ENCODE measurements at regions of chr16 and their contacts with region 1.

Region 1: GRCh38 chr16:22677024-22677830 is 136.7 kb upstream of the HS3ST2 start:
- DNase-seq: no peak
- ATAC-seq: peak in 2 of 4 donors; percentile 29 to 76
- H3K4me3 ChIP-seq: no peak overlapping the region
- H3K27ac ChIP-seq: no peak overlapping the region
- H3K4me1 ChIP-seq: no peaks in the 10 kb centered on the region
- H3K27me3 ChIP-seq: peaks cover 0 to 4% (median 0%) of the 10 kb centered on the region in 3 donors
- CTCF ChIP-seq: no peak

Region 2: DNA sequence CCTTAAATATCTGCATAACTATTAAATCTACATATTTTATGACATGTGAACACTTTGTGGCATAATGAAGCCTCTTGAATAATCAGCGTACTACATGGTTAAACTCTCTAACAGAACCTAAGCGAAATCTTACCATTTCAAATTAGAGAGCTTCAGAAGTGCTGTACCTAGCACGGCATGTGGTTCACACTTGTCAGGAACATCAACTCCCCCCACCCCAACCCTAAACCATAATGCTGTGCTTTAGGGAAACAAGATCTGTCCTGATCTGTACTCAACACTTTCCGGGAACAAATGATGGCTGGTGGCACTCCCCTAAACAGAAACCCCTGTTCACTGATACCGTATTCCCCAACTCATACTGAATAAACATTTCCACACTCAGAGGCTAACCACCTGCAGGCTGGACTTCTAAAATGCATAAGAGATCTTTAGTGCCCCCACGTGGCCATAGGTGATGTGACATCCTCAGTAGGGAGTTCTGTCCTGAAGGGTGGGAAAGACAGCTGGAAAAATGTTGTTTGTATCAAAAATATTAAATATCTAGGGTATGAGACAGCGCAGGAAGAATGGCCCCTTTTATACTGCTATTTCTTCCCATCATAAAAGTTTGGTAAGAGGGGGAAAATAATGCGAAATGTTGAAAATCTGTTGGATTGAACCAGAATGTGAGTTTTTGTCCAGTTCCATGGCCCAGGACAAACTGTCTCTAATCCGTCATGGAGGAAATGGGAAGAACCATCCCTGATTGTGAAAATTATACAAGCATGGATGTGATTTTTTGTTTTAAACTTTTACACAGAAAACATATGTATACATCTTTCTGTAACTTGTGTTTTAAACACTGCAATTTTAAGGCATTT is 383.5 kb after region 1 on chr16:
- intact Hi-C with region 1: loop called in 1 of 2 experiments (anchors 5 kb)
- DNase-seq: peak; percentile 53 to 62
- ATAC-seq: peak; percentile 82 to 92 (median 86)
- H3K4me3 ChIP-seq: no peak overlapping the region
- H3K27ac ChIP-seq: no peak overlapping the region
- H3K4me1 ChIP-seq: no peaks in the 10 kb centered on the region
- H3K27me3 ChIP-seq: peaks cover 0 to 12% (median 0%) of the 10 kb centered on the region in 3 donors
- CTCF ChIP-seq: peak; percentile 81